ENCODE measurements at regions of chr19 and their contacts with region 1.

Region 1: GRCh38 chr19:40221858-40222837 is 4.0 kb upstream of the TTC9B start:
- DNase-seq: peak; percentile 55 to 90
- H3K4me3 ChIP-seq: no peak overlapping the region
- H3K27ac ChIP-seq: no peak overlapping the region
- H3K4me1 ChIP-seq: peaks cover 3 to 9% of the 10 kb centered on the region in 2 donors
- H3K27me3 ChIP-seq: peaks cover 29% of the 10 kb centered on the region
- CTCF ChIP-seq: peak; percentile 87 to 96 (median 92)

Region 2: GRCh38 chr19:39792999-39793546 is 429.1 kb before region 1 on chr19:
- intact Hi-C with region 1: loop called (anchors 1 kb)
- DNase-seq: peak; percentile 11 to 88
- H3K4me3 ChIP-seq: peak overlapping the region; percentile 55 to 57
- H3K27ac ChIP-seq: no peak overlapping the region
- H3K4me1 ChIP-seq: no peaks in the 10 kb centered on the region
- H3K27me3 ChIP-seq: no peaks in the 10 kb centered on the region
- CTCF ChIP-seq: peak; percentile 82 to 91 (median 89)

Region 3: DNA sequence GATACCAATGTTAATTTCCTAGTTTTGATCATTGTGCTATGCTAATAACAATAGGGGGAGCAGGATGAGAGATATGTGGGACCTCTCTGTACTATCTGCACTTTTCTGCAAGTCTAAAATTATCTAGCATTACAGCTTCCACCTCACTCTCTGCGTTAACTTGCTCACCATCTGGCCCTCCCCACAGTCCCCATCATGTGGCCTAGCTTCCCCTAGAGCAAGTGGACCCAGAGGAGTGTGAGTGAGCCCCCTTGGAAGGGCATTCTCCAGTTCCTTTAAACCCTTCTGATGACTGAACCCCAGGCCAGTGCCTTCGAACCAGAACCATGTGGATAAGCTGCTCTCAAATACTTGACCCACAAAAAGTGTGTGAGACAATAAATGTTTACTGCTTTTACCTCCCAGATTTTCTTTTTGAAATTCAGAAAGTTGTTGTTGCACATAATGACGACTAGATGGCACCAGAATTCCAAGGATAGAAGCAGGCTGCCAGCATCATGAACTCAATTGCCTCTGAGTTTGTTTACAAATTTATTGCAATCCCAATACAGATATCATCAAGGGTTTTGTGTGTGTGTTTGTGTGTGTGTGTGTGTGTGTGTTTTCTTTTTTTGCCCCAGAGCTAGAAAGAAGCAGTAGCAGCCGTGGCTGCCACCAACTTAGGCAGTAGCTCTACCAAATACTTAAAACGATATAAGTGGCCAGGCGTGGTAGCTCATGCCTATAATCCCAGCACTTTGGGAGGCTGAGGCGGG is 82.4 kb before region 1 on chr19:
- intact Hi-C with region 1: loop called (anchors 1 kb)
- DNase-seq: no peak
- H3K4me3 ChIP-seq: no peak overlapping the region
- H3K27ac ChIP-seq: no peak overlapping the region
- H3K4me1 ChIP-seq: peaks cover 0 to 10% of the 10 kb centered on the region in 2 donors
- H3K27me3 ChIP-seq: no peaks in the 10 kb centered on the region
- CTCF ChIP-seq: peak; percentile 64 to 76 (median 67)

Region 4: GRCh38 chr19:40178756-40179155 is 43.4 kb before region 1 on chr19:
- intact Hi-C with region 1: no loop called
- DNase-seq: no peak
- H3K4me3 ChIP-seq: no peak overlapping the region
- H3K27ac ChIP-seq: no peak overlapping the region
- H3K4me1 ChIP-seq: no peaks in the 10 kb centered on the region
- H3K27me3 ChIP-seq: no peaks in the 10 kb centered on the region
- CTCF ChIP-seq: no peak

Region 5: GRCh38 chr19:40190891-40191835 is 31.0 kb before region 1 on chr19 and contains the start of gene MAP3K10:
- intact Hi-C with region 1: loop called (anchors 2 kb)
- DNase-seq: peak in 1 of 2 donors; percentile 86
- H3K4me3 ChIP-seq: peak within 1 kb of the TSS; percentile 75 to 99
- H3K27ac ChIP-seq: peak within 1 kb of the TSS; percentile 92 to 99
- H3K4me1 ChIP-seq: peaks cover 9 to 22% of the 10 kb centered on the region in 2 donors
- H3K27me3 ChIP-seq: no peaks in the 10 kb centered on the region
- CTCF ChIP-seq: no peak
- total RNA-seq, gene MAP3K10: 19.4 TPM

Measured in ascending aorta (tissue), 2 donors.